HAP-1 (cell line): ENCODE measurements at regions of chr15 and their contacts with region 1.

Region 1: GRCh38 chr15:31974855-31975829 is 55.2 kb upstream of the CHRNA7 start:
- DNase-seq: peak; percentile 76 to 79
- H3K4me3 ChIP-seq: no peak overlapping the region
- H3K4me1 ChIP-seq: peaks cover 5% of the 10 kb centered on the region; the same call in 1 of the 2 replicates
- H3K27me3 ChIP-seq: no peaks in the 10 kb centered on the region

Region 2: GRCh38 chr15:31511707-31512310 is 463.3 kb before region 1 on chr15:
- in situ Hi-C with region 1: loop called (anchors 25 kb)
- DNase-seq: no peak
- H3K4me3 ChIP-seq: no peak overlapping the region
- H3K4me1 ChIP-seq: no peaks in the 10 kb centered on the region
- H3K27me3 ChIP-seq: no peaks in the 10 kb centered on the region

Region 3: DNA sequence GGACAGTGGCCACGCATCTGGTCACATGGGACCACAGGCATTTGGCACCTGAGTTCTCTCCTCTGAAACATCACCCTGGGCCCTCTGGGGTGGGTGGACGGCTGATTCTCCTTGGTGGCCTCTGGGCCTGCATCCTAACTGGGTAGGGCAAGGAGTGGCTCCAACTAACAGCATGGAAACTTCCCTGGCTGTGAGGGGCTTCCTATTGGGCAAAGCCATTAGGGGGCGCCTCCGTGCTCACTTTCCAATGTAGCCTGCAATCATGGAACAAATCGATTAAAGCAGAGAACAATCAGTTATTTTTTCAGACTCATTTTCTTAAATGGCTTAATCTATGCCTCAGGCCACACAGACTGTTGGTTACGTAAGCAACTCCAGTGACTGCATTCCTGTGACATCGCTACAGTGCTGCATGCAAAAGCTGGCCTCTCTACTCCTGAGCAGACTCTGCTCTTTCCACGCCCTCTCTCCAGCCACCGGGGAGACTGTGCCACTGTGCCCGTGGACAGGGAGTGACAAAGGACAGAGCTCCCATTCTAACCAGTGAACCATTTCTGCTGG is 369.7 kb before region 1 on chr15:
- in situ Hi-C with region 1: loop called (anchors 25 kb)
- DNase-seq: peak in 1 of 2 experiments; percentile 46
- H3K4me3 ChIP-seq: no peak overlapping the region
- H3K4me1 ChIP-seq: no peaks in the 10 kb centered on the region
- H3K27me3 ChIP-seq: no peaks in the 10 kb centered on the region

Region 4: GRCh38 chr15:32979710-32980109 is 1004.6 kb after region 1 on chr15:
- in situ Hi-C with region 1: no loop called
- DNase-seq: no peak
- H3K4me3 ChIP-seq: no peak overlapping the region
- H3K4me1 ChIP-seq: no peaks in the 10 kb centered on the region
- H3K27me3 ChIP-seq: no peaks in the 10 kb centered on the region; the same call in 1 of the 2 replicates